B cell (primary cell): ENCODE measurements at regions of chr9 and their contacts with region 1.

Region 1: DNA sequence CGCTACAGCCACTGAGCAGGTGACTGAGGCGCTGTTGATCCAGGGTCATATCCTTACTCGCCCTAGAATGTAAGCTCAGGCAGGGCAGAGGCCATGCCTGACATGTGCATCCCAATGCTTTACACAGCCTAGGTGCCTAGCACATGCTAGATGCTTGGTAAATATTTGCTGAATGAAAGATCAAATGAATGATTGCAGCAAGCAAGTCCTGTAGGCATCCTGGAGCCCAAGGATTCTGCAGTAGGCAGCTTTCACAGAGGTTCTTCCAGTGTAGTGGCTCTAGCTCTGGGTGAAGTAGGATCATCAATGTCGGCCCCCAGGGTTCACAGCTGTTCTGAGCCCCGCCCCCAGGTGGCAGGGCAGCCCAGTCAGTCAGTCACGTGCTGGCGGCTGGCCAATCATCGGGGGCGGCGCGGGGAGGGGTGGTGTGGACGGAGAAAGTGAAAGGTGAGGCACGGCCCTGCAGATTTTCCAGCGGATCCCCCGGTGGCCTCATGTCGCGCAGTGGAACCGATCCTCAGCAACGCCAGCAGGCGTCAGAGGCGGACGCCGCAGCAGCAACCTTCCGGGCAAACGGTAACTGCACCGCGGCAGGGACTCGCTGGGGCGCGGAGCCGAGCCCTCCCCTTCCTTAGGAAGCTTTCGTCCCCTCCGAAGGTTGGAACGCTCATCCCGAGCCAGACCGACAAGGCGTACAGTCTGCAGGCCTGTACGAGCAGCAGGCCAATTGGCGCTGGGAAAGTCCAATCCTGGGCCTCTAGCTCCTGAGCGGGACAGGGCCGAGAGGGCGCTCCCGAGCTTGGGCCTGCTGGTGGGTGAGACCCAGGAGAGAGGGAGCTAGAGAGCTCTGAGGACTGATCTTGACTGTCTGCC is at the start of gene GALT:
- DNase-seq: peak; percentile 95
- ATAC-seq: peak; percentile 97
- H3K4me3 ChIP-seq: peak within 1 kb of the TSS; percentile 79 to 98 (median 87)
- H3K4me3 Mint-ChIP-seq: peak within 1 kb of the TSS; percentile 97
- H3K27ac ChIP-seq: peak within 1 kb of the TSS; percentile 47 to 64
- H3K27ac Mint-ChIP-seq: peak within 1 kb of the TSS; percentile 94
- H3K4me1 ChIP-seq: peaks cover 16 to 17% of the 10 kb centered on the region in 2 donors
- H3K4me1 Mint-ChIP-seq: peaks cover 28% of the 10 kb centered on the region
- H3K27me3 ChIP-seq: no peaks in the 10 kb centered on the region
- H3K27me3 Mint-ChIP-seq: no peaks in the 10 kb centered on the region
- CTCF ChIP-seq: peak; percentile 62
- total RNA-seq, gene GALT: 96.6 and 111 TPM in 2 replicates

Region 2: DNA sequence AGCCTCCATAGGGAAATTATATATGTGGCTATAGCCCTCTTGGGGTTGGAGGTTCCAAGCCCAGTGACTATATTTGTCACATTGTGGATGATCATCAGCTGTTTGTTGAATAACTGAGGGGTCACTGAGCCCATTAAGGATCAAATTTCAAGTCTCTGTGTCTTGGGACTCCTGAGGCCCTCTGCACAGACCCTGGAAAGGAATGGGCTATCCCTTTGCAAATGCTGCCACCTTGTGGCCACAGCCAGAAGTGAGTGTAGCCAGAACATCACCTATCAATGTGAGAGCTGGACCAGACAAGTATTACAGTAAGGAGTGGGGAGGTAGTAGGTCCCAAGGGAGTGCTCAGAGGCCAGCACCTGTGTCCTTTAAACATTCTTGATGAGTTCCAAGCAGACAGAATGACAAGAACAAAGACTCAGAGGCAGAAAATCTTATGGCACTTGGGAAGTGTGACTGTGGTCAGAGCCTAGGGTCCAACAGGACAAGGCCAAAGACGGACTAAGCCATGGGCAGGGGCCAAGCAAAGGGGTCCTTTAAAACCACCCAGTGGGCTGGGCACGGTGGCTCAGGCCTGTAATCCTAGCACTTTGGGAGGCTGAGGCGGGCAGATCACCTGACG is 42.7 kb before region 1 on chr9:
- CTCF ChIA-PET with region 1: interaction called, 10 read pairs
- POLR2A ChIA-PET with region 1: no interaction called
- intact Hi-C with region 1: no loop called
- DNase-seq: peak; percentile 82
- ATAC-seq: peak; percentile 94
- H3K4me3 ChIP-seq: no peak overlapping the region
- H3K4me3 Mint-ChIP-seq: no peak overlapping the region
- H3K27ac ChIP-seq: no peak overlapping the region
- H3K27ac Mint-ChIP-seq: no peak overlapping the region
- H3K4me1 ChIP-seq: no peaks in the 10 kb centered on the region
- H3K4me1 Mint-ChIP-seq: no peaks in the 10 kb centered on the region
- H3K27me3 ChIP-seq: peaks cover 0 to 10% (median 0%) of the 10 kb centered on the region in 4 experiments
- H3K27me3 Mint-ChIP-seq: peaks cover 13% of the 10 kb centered on the region
- CTCF ChIP-seq: peak; percentile 91

Region 3: GRCh38 chr9:34620061-34620994 is 26.1 kb before region 1 on chr9 and contains the start of gene DCTN3:
- CTCF ChIA-PET with region 1: interaction called, 10 read pairs
- POLR2A ChIA-PET with region 1: interaction called, 3 read pairs
- intact Hi-C with region 1: no loop called
- DNase-seq: peak; percentile 94
- ATAC-seq: peak; percentile 95
- H3K4me3 ChIP-seq: peak within 1 kb of the TSS; percentile 66 to 96 (median 81)
- H3K4me3 Mint-ChIP-seq: peak within 1 kb of the TSS; percentile 97
- H3K27ac ChIP-seq: peak within 1 kb of the TSS in 1 of 2 donors; percentile 49
- H3K27ac Mint-ChIP-seq: peak within 1 kb of the TSS; percentile 92
- H3K4me1 ChIP-seq: peaks cover 33 to 43% of the 10 kb centered on the region in 2 donors
- H3K4me1 Mint-ChIP-seq: peaks cover 36% of the 10 kb centered on the region
- H3K27me3 ChIP-seq: peaks cover 0 to 45% (median 30%) of the 10 kb centered on the region in 4 experiments
- H3K27me3 Mint-ChIP-seq: peaks cover 32% of the 10 kb centered on the region
- CTCF ChIP-seq: no peak
- total RNA-seq, gene DCTN3: 48.2 and 55.3 TPM in 2 replicates

Region 4: DNA sequence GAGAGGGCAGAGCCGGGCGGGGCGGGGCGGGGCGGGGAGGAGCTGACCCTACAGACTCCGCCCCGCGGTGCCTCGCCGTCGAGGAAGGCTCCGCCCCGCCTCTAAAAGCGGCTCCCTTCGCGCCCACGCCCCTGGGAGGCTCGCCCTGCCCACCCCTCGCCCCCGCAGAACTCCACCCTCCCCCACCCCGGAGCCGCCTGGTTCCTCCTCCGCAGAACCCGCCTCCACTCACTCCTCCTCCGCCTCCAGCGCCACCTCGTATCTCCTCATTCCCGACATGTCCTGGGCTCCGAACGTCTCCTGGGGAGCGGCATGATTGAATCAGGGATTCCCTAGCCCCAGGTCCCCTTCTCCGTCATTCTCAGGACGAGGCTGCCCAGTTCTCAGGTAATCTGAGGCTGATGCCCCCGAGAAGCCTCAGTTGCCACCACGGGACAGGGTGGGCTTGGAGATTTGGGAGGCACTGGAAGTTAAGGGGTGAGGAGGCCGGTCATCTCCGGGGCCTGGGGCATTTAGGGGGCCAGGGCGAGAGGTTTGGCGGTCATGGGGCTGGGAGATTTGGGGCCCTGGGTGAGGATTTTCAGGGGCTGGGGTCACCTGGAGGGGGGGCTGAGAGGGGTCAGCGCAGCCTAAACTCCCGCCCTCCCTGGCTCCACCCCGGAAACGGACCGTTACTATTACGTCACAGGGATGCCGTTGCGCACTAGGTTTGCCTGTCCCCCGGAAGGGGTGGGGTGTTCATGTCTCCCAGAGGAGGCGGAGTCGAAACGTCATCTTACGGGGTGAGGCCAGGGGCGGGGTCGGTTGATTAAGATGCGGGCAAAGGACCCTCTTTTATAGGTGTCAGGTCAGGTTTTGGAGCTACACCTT is 19.2 kb after region 1 on chr9:
- CTCF ChIA-PET with region 1: interaction called, 34 read pairs
- POLR2A ChIA-PET with region 1: interaction called, 13 read pairs
- intact Hi-C with region 1: loop called (anchors 1 kb)
- DNase-seq: peak; percentile 93
- ATAC-seq: peak; percentile 90
- H3K4me3 ChIP-seq: peak overlapping the region; percentile 65 to 87 (median 83)
- H3K4me3 Mint-ChIP-seq: peak overlapping the region; percentile 94
- H3K27ac ChIP-seq: peak overlapping the region; percentile 86 to 93
- H3K27ac Mint-ChIP-seq: peak overlapping the region; percentile 94
- H3K4me1 ChIP-seq: peaks cover 10 to 18% of the 10 kb centered on the region in 2 donors
- H3K4me1 Mint-ChIP-seq: peaks cover 20% of the 10 kb centered on the region
- H3K27me3 ChIP-seq: no peaks in the 10 kb centered on the region
- H3K27me3 Mint-ChIP-seq: no peaks in the 10 kb centered on the region
- CTCF ChIP-seq: no peak